ENCODE measurements at regions of chr21 and their contacts with region 1.

Region 1: DNA sequence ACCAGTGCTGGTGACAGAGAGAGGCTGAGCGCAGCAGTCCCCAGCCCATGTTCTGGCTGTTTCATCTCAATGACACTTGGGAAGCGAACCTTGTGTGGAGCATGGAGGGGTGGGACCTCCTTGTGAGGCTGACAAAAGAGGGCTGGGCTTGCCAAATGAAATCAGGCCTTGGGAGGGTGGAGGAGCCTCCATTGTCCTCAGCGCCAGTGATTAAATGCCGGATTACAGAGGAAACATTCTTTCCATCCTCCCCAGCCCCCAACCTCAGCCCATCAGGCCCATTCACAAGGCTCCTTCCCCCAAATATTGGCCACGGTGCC is 63.3 kb upstream of the PAXBP1 start:
- DNase-seq: no peak
- H3K4me3 ChIP-seq: no peak overlapping the region
- H3K27ac ChIP-seq: no peak overlapping the region
- H3K4me1 ChIP-seq: no peaks in the 10 kb centered on the region
- H3K27me3 ChIP-seq: peaks cover 22% of the 10 kb centered on the region
- CTCF ChIP-seq: no peak

Region 2: DNA sequence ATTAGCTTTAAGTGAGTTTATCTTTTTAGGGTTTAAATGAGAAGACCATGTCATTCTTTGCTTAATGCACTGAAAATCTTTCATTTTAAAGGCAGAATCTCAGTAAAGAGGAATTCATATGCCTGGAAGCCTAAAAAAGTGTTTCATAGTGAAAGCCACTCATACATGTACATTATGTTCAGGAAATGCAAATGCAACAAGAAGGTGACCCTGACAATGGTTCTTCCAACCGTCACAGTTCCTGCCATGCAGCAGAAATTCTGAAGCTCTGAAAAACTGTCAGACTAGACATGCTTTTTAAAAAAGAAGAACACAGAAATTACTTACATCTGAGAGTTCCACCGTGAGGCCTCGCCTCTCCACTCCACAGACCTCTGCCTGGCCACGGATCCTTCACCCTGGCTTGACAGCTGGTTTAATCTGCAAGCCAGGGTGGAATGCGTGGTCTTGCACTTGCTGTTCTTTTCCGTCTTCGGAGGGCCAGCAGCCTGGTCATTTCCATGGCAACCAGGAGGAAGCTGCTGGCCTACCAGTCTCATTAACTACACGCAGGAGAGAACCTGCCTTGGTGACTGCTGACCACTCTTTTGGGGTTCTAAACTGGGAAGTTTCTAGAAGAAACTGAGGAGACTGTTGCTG is 21.5 kb before region 1 on chr21:
- CTCF ChIA-PET with region 1: no interaction called
- POLR2A ChIA-PET with region 1: no interaction called
- intact Hi-C with region 1: no loop called
- DNase-seq: no peak
- H3K4me3 ChIP-seq: no peak overlapping the region
- H3K27ac ChIP-seq: no peak overlapping the region
- H3K4me1 ChIP-seq: no peaks in the 10 kb centered on the region
- H3K27me3 ChIP-seq: no peaks in the 10 kb centered on the region
- CTCF ChIP-seq: no peak

Region 3: GRCh38 chr21:32966120-32966519 is 131.2 kb after region 1 on chr21:
- CTCF ChIA-PET with region 1: no interaction called
- POLR2A ChIA-PET with region 1: no interaction called
- intact Hi-C with region 1: no loop called
- DNase-seq: no peak
- H3K4me3 ChIP-seq: no peak overlapping the region
- H3K27ac ChIP-seq: no peak overlapping the region
- H3K4me1 ChIP-seq: no peaks in the 10 kb centered on the region
- H3K27me3 ChIP-seq: peaks cover 21% of the 10 kb centered on the region
- CTCF ChIP-seq: no peak

Region 4: GRCh38 chr21:33449616-33450015 is 614.7 kb after region 1 on chr21:
- CTCF ChIA-PET with region 1: no interaction called
- POLR2A ChIA-PET with region 1: no interaction called
- intact Hi-C with region 1: loop called (anchors 5 kb)
- DNase-seq: no peak
- H3K4me3 ChIP-seq: no peak overlapping the region
- H3K27ac ChIP-seq: no peak overlapping the region
- H3K4me1 ChIP-seq: no peaks in the 10 kb centered on the region
- H3K27me3 ChIP-seq: no peaks in the 10 kb centered on the region
- CTCF ChIP-seq: no peak

Region 5: GRCh38 chr21:33608559-33608958 is 773.7 kb after region 1 on chr21:
- CTCF ChIA-PET with region 1: no interaction called
- POLR2A ChIA-PET with region 1: no interaction called
- intact Hi-C with region 1: loop called (anchors 10 kb)
- DNase-seq: no peak
- H3K4me3 ChIP-seq: no peak overlapping the region
- H3K27ac ChIP-seq: no peak overlapping the region
- H3K4me1 ChIP-seq: no peaks in the 10 kb centered on the region; the same call in 1 of the 2 replicates
- H3K27me3 ChIP-seq: no peaks in the 10 kb centered on the region
- CTCF ChIP-seq: no peak

Region 6: GRCh38 chr21:33894736-33895288 is 1059.9 kb after region 1 on chr21:
- CTCF ChIA-PET with region 1: no interaction called
- POLR2A ChIA-PET with region 1: no interaction called
- intact Hi-C with region 1: loop called (anchors 10 kb)
- DNase-seq: peak in 1 of 2 experiments; percentile 66
- H3K4me3 ChIP-seq: no peak overlapping the region
- H3K27ac ChIP-seq: no peak overlapping the region
- H3K4me1 ChIP-seq: 0 out of 2 replicates have a peak, but pooled peaks cover 7% of the 10 kb centered on the region
- H3K27me3 ChIP-seq: no peaks in the 10 kb centered on the region
- CTCF ChIP-seq: peak; percentile 63

Measured in PC-9 (cell line).